B cell (primary cell): ENCODE measurements at regions of chr12 and their contacts with region 1.

Region 1: GRCh38 chr12:8890313-8891085 is 23.8 kb upstream of the PHC1 start:
- DNase-seq: peak; percentile 77
- ATAC-seq: peak; percentile 86
- H3K4me3 ChIP-seq: peak overlapping the region; percentile 45 to 81 (median 62)
- H3K4me3 Mint-ChIP-seq: peak overlapping the region; percentile 89
- H3K27ac ChIP-seq: peak overlapping the region in 1 of 2 donors; percentile 60
- H3K27ac Mint-ChIP-seq: peak overlapping the region; percentile 53
- H3K4me1 ChIP-seq: peaks cover 0 to 4% of the 10 kb centered on the region in 2 donors
- H3K4me1 Mint-ChIP-seq: peaks cover 5% of the 10 kb centered on the region
- H3K27me3 ChIP-seq: no peaks in the 10 kb centered on the region
- H3K27me3 Mint-ChIP-seq: peaks cover 4% of the 10 kb centered on the region
- CTCF ChIP-seq: peak; percentile 96

Region 2: GRCh38 chr12:7667125-7667524 is 1223.4 kb before region 1 on chr12:
- CTCF ChIA-PET with region 1: no interaction called
- POLR2A ChIA-PET with region 1: no interaction called
- intact Hi-C with region 1: no loop called
- DNase-seq: no peak
- ATAC-seq: no peak
- H3K4me3 ChIP-seq: no peak overlapping the region
- H3K4me3 Mint-ChIP-seq: no peak overlapping the region
- H3K27ac ChIP-seq: no peak overlapping the region
- H3K27ac Mint-ChIP-seq: no peak overlapping the region
- H3K4me1 ChIP-seq: no peaks in the 10 kb centered on the region
- H3K4me1 Mint-ChIP-seq: no peaks in the 10 kb centered on the region
- H3K27me3 ChIP-seq: no peaks in the 10 kb centered on the region
- H3K27me3 Mint-ChIP-seq: no peaks in the 10 kb centered on the region
- CTCF ChIP-seq: peak; percentile 13

Region 3: DNA sequence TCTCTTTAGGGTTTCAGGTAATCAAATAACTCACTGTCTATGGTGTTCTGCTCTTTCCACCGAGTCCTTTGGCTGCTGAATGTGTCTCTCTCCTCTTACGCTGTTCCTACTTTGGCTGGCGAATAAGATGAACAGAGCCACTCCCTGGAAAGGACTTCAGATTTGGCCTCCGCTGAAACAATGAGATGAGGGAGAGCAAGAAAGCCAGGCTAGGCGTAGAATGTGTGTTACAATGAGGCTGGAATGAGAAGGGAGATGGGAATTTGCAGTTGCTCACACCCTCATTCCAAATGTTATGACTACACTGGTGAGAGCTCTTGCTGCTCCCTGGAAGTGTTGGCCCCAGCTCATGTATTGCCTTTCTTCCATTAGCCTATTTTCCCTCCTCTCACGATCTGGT is 227.9 kb before region 1 on chr12 and contains the start of gene MFAP5:
- CTCF ChIA-PET with region 1: interaction called, 30 read pairs
- POLR2A ChIA-PET with region 1: no interaction called
- intact Hi-C with region 1: loop called (anchors 1 kb)
- DNase-seq: no peak
- ATAC-seq: no peak
- H3K4me3 ChIP-seq: no peak within 1 kb of the TSS
- H3K4me3 Mint-ChIP-seq: no peak within 1 kb of the TSS
- H3K27ac ChIP-seq: no peak within 1 kb of the TSS
- H3K27ac Mint-ChIP-seq: no peak within 1 kb of the TSS
- H3K4me1 ChIP-seq: peaks cover 6 to 8% of the 10 kb centered on the region in 2 donors
- H3K4me1 Mint-ChIP-seq: peaks cover 4% of the 10 kb centered on the region
- H3K27me3 ChIP-seq: no peaks in the 10 kb centered on the region
- H3K27me3 Mint-ChIP-seq: no peaks in the 10 kb centered on the region
- CTCF ChIP-seq: no peak
- total RNA-seq, gene MFAP5: 0.94 TPM in 1 of 2 replicates, not detected in the other

Region 4: GRCh38 chr12:8681041-8681902 is 209.2 kb before region 1 on chr12:
- CTCF ChIA-PET with region 1: interaction called, 110 read pairs
- POLR2A ChIA-PET with region 1: no interaction called
- intact Hi-C with region 1: loop called (anchors 1 kb)
- DNase-seq: no peak
- ATAC-seq: no peak
- H3K4me3 ChIP-seq: no peak overlapping the region
- H3K4me3 Mint-ChIP-seq: no peak overlapping the region
- H3K27ac ChIP-seq: no peak overlapping the region
- H3K27ac Mint-ChIP-seq: no peak overlapping the region
- H3K4me1 ChIP-seq: no peaks in the 10 kb centered on the region
- H3K4me1 Mint-ChIP-seq: peaks cover 6% of the 10 kb centered on the region
- H3K27me3 ChIP-seq: no peaks in the 10 kb centered on the region
- H3K27me3 Mint-ChIP-seq: peaks cover 9% of the 10 kb centered on the region
- CTCF ChIP-seq: no peak

Region 5: DNA sequence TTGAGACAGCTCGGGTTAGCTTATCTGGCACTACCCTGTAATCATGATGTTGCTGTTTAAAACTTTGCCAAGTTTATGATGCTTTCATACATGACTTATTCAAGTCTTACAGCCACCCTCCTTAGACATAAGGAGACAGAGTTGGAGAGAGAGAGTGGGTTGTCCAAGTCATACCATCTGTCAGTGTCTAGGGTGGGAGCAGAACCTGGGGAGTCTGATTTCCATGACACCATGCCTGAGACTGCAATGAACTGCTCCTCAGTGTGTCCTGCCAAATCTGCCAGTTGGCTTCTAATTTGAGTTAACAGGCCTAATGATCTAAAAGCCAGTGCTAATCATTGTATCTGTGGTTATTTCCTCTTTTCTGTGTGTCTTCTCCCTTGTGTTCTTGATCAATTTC is 19.9 kb before region 1 on chr12:
- CTCF ChIA-PET with region 1: interaction called, 12 read pairs
- POLR2A ChIA-PET with region 1: no interaction called
- intact Hi-C with region 1: no loop called
- DNase-seq: no peak
- ATAC-seq: no peak
- H3K4me3 ChIP-seq: no peak overlapping the region
- H3K4me3 Mint-ChIP-seq: no peak overlapping the region
- H3K27ac ChIP-seq: no peak overlapping the region
- H3K27ac Mint-ChIP-seq: no peak overlapping the region
- H3K4me1 ChIP-seq: no peaks in the 10 kb centered on the region
- H3K4me1 Mint-ChIP-seq: no peaks in the 10 kb centered on the region
- H3K27me3 ChIP-seq: no peaks in the 10 kb centered on the region
- H3K27me3 Mint-ChIP-seq: no peaks in the 10 kb centered on the region
- CTCF ChIP-seq: no peak

Region 6: GRCh38 chr12:8914716-8915526 is 24.4 kb after region 1 on chr12:
- CTCF ChIA-PET with region 1: interaction called, 8 read pairs
- POLR2A ChIA-PET with region 1: no interaction called
- intact Hi-C with region 1: loop called (anchors 1 kb)
- DNase-seq: peak; percentile 79
- ATAC-seq: peak; percentile 80
- H3K4me3 ChIP-seq: peak overlapping the region; percentile 64 to 87 (median 75)
- H3K4me3 Mint-ChIP-seq: no peak overlapping the region
- H3K27ac ChIP-seq: peak overlapping the region; percentile 31 to 47
- H3K27ac Mint-ChIP-seq: no peak overlapping the region
- H3K4me1 ChIP-seq: peaks cover 20 to 22% of the 10 kb centered on the region in 2 donors
- H3K4me1 Mint-ChIP-seq: peaks cover 26% of the 10 kb centered on the region
- H3K27me3 ChIP-seq: no peaks in the 10 kb centered on the region
- H3K27me3 Mint-ChIP-seq: no peaks in the 10 kb centered on the region
- CTCF ChIP-seq: no peak

Region 7: GRCh38 chr12:9039397-9039977 is 149.0 kb after region 1 on chr12:
- CTCF ChIA-PET with region 1: interaction called, 19 read pairs
- POLR2A ChIA-PET with region 1: no interaction called
- intact Hi-C with region 1: loop called (anchors 1 kb)
- DNase-seq: peak; percentile 57
- ATAC-seq: no peak
- H3K4me3 ChIP-seq: no peak overlapping the region
- H3K4me3 Mint-ChIP-seq: no peak overlapping the region
- H3K27ac ChIP-seq: no peak overlapping the region
- H3K27ac Mint-ChIP-seq: no peak overlapping the region
- H3K4me1 ChIP-seq: no peaks in the 10 kb centered on the region
- H3K4me1 Mint-ChIP-seq: no peaks in the 10 kb centered on the region
- H3K27me3 ChIP-seq: no peaks in the 10 kb centered on the region
- H3K27me3 Mint-ChIP-seq: peaks cover 4% of the 10 kb centered on the region
- CTCF ChIP-seq: peak; percentile 93